Mammary epithelial cell (primary cell): ENCODE measurements at regions of chr19 and their contacts with region 1.

Region 1: GRCh38 chr19:44845612-44846454 is at the start of gene NECTIN2:
- DNase-seq: peak; percentile 96
- H3K4me3 ChIP-seq: peak within 1 kb of the TSS; percentile 73 to 94 (median 87)
- H3K27ac ChIP-seq: peak within 1 kb of the TSS; percentile 92
- H3K4me1 ChIP-seq: peaks cover 22% of the 10 kb centered on the region
- H3K27me3 ChIP-seq: no peaks in the 10 kb centered on the region
- CTCF ChIP-seq: peak; percentile 72 to 77
- total RNA-seq, gene NECTIN2: 51.0 to 74.5 TPM

Region 2: DNA sequence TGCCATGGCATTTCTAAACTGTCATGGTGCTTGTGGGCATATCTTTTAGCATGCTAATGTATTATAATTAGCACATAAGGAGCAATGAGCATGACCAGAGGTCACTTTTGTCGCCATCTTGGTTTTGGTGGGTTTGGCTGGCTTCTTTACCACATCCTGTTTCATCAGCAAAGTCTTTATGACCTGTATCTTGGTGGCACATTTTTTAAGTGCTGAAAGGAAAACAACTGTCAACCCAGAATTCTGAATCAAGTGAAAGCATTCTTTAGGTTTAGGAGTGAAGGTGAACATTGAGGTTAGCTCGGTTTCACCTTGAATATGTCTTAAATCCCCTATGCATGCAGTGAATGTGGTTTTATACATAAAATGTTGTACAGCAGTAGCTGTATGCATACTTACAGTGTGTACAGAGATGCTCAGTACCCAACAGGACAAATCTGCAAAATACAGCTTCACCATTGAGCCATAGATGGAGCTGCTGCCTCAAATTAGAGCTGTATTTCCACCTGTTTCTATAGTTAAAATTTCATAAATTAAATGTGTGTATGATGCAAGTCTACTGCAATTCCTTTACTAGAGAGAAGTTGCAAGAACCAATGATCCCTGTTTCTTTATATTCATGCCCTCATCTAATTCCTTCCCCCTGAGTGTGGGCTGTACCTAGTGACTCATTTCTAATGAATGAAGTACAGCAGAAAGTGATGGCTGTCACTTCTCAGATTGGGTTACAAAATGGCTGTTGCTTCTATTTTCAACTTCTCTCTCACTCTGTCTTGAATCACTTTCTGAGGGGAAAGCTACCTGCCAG is 257.7 kb before region 1 on chr19:
- CTCF ChIA-PET with region 1: no interaction called
- dilution Hi-C with region 1: no loop called
- in situ Hi-C with region 1: no loop called
- intact Hi-C with region 1: loop called (anchors 1 kb)
- DNase-seq: peak; percentile 74
- H3K4me3 ChIP-seq: no peak overlapping the region
- H3K27ac ChIP-seq: peak overlapping the region; percentile 76
- H3K4me1 ChIP-seq: peaks cover 20% of the 10 kb centered on the region
- H3K27me3 ChIP-seq: no peaks in the 10 kb centered on the region
- CTCF ChIP-seq: peak; percentile 13 to 52

Region 3: GRCh38 chr19:44723952-44724319 is 121.9 kb before region 1 on chr19:
- CTCF ChIA-PET with region 1: interaction called, 12 read pairs
- dilution Hi-C with region 1: no loop called
- in situ Hi-C with region 1: no loop called
- intact Hi-C with region 1: loop called (anchors 1 kb)
- DNase-seq: peak; percentile 70
- H3K4me3 ChIP-seq: no peak overlapping the region
- H3K27ac ChIP-seq: no peak overlapping the region
- H3K4me1 ChIP-seq: peaks cover 11% of the 10 kb centered on the region
- H3K27me3 ChIP-seq: no peaks in the 10 kb centered on the region
- CTCF ChIP-seq: peak; percentile 97 to 99

Region 4: GRCh38 chr19:44777715-44778347 is 68.0 kb before region 1 on chr19 and contains the start of gene CBLC:
- CTCF ChIA-PET with region 1: no interaction called
- dilution Hi-C with region 1: no loop called
- in situ Hi-C with region 1: no loop called
- intact Hi-C with region 1: loop called (anchors 2 kb)
- DNase-seq: peak; percentile 94
- H3K4me3 ChIP-seq: peak within 1 kb of the TSS; percentile 87 to 97 (median 91)
- H3K27ac ChIP-seq: peak within 1 kb of the TSS; percentile 93
- H3K4me1 ChIP-seq: peaks cover 57% of the 10 kb centered on the region
- H3K27me3 ChIP-seq: no peaks in the 10 kb centered on the region
- CTCF ChIP-seq: peak in 1 of 2 donors; percentile 39
- total RNA-seq, gene CBLC: 51.2 to 76.7 TPM

Region 5: DNA sequence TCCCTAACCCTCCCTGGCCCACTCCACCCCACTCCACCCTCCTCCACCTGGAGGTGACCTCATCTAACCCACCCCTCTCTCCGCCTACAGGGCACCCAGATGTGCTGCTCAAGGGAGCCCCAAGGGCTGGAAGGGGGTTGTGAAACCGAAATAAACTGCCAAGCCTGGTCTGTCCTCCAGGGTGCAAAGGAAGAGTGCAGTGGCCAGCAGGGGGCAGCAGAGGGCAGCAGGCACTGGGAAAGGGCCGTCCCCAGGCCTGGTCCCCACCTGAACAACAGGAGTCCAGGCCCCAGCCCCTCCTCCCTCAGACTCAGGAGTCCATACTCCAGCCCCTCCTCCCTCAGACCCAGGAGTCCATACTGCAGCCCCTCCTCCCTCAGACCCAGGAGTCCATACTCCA is 45.4 kb before region 1 on chr19:
- CTCF ChIA-PET with region 1: no interaction called
- dilution Hi-C with region 1: no loop called
- in situ Hi-C with region 1: no loop called
- intact Hi-C with region 1: loop called (anchors 1 kb)
- DNase-seq: peak; percentile 63
- H3K4me3 ChIP-seq: no peak overlapping the region
- H3K27ac ChIP-seq: no peak overlapping the region
- H3K4me1 ChIP-seq: peaks cover 3% of the 10 kb centered on the region
- H3K27me3 ChIP-seq: no peaks in the 10 kb centered on the region
- CTCF ChIP-seq: peak; percentile 98 to 99

Region 6: DNA sequence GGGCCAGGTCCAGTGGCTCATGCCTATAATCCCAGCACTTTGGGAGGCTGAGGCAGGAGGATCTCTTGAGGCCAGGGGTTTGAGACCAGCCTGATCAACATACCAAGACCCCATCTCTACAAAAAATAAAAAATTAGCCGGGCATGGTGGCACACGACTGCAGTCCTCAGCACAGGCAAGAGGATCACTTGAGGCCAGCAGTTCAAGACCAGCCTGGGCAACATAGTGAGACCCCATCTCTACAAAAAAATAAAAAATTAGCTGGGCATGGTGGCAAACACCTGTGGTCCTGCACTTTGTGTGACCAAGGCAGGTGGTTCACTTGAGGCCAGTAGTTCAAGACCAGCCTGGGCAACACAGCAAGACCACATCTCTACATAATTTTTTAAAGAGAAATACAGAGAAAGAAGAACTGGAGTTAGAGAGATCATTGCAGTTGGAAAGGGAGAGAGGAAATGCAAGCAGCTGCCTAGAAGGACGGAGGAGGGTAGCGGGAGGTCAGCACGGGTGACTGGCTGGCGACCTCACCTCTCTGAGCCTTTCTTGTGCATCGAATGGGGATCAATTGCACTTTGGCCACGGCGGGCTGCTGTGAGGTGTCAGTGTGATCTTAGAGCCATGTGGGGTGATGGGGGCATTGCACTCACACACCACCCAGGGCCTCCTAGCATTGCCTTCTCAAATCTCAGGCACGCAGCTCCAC is 23.0 kb before region 1 on chr19:
- CTCF ChIA-PET with region 1: interaction called, 10 read pairs
- dilution Hi-C with region 1: no loop called
- in situ Hi-C with region 1: no loop called
- intact Hi-C with region 1: no loop called
- DNase-seq: no peak
- H3K4me3 ChIP-seq: no peak overlapping the region
- H3K27ac ChIP-seq: no peak overlapping the region
- H3K4me1 ChIP-seq: no peaks in the 10 kb centered on the region
- H3K27me3 ChIP-seq: no peaks in the 10 kb centered on the region
- CTCF ChIP-seq: no peak

Region 7: DNA sequence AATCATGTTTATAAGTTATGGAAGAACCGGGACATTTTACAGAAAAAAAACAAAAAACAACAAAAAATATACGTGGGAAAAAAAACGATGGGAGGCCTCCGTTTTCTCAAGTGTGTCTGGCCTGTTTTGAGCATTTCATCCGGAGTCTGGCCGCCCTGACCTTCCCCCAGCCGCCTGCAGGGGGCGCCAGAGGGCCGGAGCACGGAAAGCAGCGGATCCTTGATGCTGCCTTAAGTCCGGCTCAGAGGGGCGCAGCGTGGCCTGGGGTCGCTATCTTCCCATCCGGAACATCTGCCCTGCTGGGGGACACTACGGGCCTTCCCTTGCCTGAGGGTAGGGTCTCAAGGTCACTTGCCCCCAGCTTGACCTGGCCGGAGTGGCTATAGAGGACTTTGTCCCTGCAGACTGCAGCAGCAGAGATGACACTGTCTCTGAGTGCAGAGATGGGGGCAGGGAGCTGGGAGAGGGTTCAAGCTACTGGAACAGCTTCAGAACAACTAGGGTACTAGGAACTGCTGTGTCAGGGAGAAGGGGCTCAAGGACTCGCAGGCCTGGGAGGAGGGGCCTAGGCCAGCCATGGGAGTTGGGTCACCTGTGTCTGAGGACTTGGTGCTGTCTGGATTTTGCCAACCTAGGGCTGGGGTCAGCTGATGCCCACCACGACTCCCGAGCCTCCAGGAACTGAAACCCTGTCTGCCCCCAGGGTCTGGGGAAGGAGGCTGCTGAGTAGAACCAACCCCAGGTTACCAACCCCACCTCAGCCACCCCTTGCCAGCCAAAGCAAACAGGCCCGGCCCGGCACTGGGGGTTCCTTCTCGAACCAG is 58.0 kb after region 1 on chr19:
- CTCF ChIA-PET with region 1: no interaction called
- dilution Hi-C with region 1: no loop called
- in situ Hi-C with region 1: no loop called
- intact Hi-C with region 1: no loop called
- DNase-seq: no peak
- H3K4me3 ChIP-seq: no peak overlapping the region
- H3K27ac ChIP-seq: no peak overlapping the region
- H3K4me1 ChIP-seq: peaks cover 4% of the 10 kb centered on the region
- H3K27me3 ChIP-seq: no peaks in the 10 kb centered on the region
- CTCF ChIP-seq: peak; percentile 94 to 98

Region 8: DNA sequence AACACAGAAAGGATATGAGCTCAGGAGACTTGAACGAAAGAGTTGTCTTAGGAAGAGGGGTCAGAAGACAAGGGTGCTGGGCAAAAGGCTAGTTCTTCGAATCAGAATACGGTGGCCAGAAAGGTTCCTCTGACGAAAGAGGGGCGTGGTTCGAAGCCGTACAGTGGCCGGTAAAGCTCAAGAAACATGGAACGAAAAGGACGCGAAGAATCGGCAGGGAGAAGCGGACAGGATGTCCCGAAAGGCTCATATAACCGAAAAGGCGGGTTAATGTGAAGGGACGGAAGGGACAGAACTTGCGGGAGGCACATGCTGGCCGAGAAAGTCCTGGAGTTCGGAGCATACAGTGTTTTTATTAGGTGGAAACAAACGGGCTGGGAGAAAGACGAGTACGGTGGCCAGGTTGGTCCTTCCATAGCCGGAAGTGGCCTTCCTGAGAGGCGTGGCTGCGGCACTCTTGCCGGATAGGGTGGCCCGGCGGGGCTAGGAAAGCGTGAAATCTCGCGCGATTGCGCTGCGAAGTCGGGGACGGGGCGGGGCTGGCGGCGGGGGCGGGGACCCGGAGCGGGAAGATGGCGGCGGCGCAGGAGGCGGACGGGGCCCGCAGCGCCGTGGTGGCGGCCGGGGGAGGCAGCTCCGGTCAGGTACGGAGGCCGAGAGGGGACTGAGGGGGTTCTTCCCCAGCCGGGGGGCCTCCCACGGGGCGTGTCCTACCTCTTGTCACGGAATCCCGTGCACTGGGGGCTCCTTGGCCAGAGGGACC is 109.2 kb after region 1 on chr19 and contains the start of gene CLPTM1:
- CTCF ChIA-PET with region 1: no interaction called
- dilution Hi-C with region 1: no loop called
- in situ Hi-C with region 1: no loop called
- intact Hi-C with region 1: loop called (anchors 5 kb)
- DNase-seq: peak; percentile 96
- H3K4me3 ChIP-seq: peak within 1 kb of the TSS; percentile 90 to 98 (median 93)
- H3K27ac ChIP-seq: peak within 1 kb of the TSS; percentile 94
- H3K4me1 ChIP-seq: peaks cover 16% of the 10 kb centered on the region
- H3K27me3 ChIP-seq: no peaks in the 10 kb centered on the region
- CTCF ChIP-seq: no peak
- total RNA-seq, gene CLPTM1: 36.5 to 89.7 TPM